ENCODE measurements at regions of chr1 and their contacts with region 1.

Region 1: DNA sequence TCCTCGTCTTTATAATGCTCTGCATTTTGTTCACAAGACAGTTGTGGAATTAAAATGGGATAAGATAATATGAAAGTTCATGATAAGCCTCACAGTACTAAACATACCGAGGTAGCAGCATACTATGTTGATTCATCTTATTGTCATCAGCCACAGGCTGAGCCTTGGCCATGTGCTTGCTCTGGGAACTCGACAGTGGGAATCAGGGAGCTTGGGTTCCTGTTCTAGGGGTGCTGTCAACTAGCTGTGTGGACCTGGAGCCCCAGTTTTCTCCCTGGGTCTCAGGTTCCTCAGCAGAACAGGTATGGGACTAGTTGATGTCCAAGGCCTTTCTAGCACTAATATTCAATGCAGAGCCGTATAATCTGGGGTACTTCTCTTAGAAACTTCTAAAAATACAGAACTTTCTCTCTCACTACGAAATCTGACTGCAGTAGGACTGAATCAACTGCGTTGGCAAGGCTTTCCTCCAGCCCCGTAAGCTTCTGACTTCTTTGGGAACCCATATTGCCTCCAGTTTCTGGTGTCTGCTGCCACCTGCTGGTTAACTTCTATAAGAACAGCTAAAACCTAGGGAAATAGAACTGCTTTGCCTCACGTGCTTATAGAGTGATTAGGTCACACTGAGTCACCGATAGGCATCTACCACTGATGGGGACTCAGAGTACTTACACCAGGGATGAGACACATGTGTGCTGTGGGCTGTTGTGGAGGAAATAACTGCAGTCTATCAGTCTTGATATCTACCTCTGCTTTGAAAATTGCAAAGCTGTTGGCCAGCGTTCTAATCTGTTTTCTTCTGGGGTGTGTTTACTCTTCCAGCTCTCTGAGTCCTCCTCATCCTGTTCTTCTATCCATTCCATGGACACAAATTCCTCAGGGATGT is 110.9 kb downstream of the RGL1 start:
- DNase-seq: peak; percentile 97
- H3K4me3 ChIP-seq: no peak overlapping the region
- H3K27ac ChIP-seq: peak overlapping the region; percentile 59
- H3K4me1 ChIP-seq: peaks cover 32% of the 10 kb centered on the region
- H3K27me3 ChIP-seq: no peaks in the 10 kb centered on the region
- CTCF ChIP-seq: peak; percentile 68 to 74
- POLR2A ChIP-seq: peak; percentile 54

Region 2: DNA sequence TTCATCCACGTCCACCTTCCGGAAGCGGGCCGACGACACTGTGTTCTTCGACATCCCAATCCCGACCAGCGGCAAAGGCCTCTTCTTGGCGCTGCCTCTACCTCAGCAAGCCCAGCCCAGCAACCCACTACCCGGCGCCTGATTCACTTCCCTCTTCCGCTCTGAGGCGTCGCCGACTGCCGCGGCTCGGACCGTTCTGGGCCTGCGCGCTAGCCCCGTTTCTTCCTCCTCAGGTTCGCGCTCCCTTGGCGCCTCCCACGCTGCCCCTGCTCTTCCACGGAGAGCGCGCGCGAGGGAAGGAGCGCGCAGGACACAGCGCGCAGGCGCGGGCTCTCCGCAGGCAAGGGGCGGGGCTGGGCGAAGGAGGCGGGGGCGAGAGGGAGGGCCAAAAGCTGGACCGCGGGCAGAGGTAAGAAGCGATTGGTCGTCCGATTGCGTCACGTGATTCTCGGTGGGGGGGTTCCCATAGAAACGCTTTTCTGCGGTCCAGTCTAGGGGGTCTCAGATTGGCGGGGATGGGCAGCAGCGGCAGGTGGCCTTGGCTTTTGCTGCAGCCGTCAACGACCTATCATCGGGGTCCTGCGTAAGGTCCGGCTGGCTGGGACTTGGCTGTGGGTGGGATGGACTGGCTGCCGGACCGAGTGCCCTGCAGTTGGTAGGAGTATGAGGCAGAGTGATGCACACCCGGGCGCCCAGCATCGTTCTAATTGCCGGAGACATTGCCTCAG is 280.1 kb before region 1 on chr1 and contains the start of gene ARPC5:
- CTCF ChIA-PET with region 1: interaction called, 46 read pairs
- POLR2A ChIA-PET with region 1: no interaction called
- dilution Hi-C with region 1: no loop called
- intact Hi-C with region 1: loop called (anchors 1 kb)
- DNase-seq: peak; percentile 100
- H3K4me3 ChIP-seq: peak within 1 kb of the TSS; percentile 93 to 100 (median 99)
- H3K27ac ChIP-seq: peak within 1 kb of the TSS; percentile 67
- H3K4me1 ChIP-seq: peaks cover 28% of the 10 kb centered on the region
- H3K27me3 ChIP-seq: no peaks in the 10 kb centered on the region
- CTCF ChIP-seq: no peak
- POLR2A ChIP-seq: peak; percentile 95
- total RNA-seq, gene ARPC5: 185 and 190 TPM in 2 replicates

Region 3: DNA sequence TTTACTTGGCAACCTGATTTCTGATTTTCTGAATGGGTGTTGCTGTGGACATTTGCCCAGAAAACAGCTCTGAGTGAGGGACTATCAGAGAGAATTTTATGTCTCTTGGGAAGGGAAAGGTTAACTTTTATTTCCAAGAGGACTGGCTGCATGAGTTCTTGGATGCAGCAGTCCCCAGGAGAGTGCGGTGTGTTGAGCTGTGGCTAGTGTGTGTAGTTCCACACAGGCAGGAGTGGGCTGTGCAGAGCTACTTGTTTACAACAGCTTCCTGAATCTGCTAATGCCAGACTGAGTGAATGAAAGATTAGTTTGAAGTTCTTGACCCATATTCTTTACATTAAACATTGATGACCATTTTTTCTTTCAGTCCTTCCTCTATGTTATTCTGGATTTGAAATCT is 221.8 kb before region 1 on chr1:
- CTCF ChIA-PET with region 1: interaction called, 13 read pairs
- POLR2A ChIA-PET with region 1: no interaction called
- dilution Hi-C with region 1: no loop called
- intact Hi-C with region 1: no loop called
- DNase-seq: peak; percentile 11
- H3K4me3 ChIP-seq: no peak overlapping the region
- H3K27ac ChIP-seq: no peak overlapping the region
- H3K4me1 ChIP-seq: peaks cover 14% of the 10 kb centered on the region
- H3K27me3 ChIP-seq: no peaks in the 10 kb centered on the region
- CTCF ChIP-seq: no peak
- POLR2A ChIP-seq: no peak

Region 4: DNA sequence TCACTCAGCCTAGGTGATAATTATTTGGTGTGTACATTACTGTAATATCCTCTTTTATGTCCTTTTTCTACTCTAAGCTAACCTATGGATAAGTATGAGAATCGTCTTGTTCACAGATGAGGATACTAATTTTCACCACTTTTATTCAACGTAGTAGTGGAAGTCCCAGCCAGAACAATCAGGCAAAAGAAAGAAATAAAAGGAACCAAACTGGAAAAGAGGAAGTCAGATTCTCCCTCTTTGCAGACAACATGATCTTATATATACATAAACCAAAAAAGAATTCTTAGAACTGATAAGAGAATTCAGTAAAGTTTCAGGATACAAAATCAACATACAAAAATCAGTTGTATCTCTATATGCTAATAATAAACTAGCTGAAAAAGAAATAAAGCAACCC is 123.6 kb before region 1 on chr1:
- CTCF ChIA-PET with region 1: interaction called, 10 read pairs
- POLR2A ChIA-PET with region 1: no interaction called
- dilution Hi-C with region 1: no loop called
- intact Hi-C with region 1: no loop called
- DNase-seq: no peak
- H3K4me3 ChIP-seq: no peak overlapping the region
- H3K27ac ChIP-seq: no peak overlapping the region
- H3K4me1 ChIP-seq: no peaks in the 10 kb centered on the region
- H3K27me3 ChIP-seq: no peaks in the 10 kb centered on the region
- CTCF ChIP-seq: no peak
- POLR2A ChIP-seq: no peak

Region 5: DNA sequence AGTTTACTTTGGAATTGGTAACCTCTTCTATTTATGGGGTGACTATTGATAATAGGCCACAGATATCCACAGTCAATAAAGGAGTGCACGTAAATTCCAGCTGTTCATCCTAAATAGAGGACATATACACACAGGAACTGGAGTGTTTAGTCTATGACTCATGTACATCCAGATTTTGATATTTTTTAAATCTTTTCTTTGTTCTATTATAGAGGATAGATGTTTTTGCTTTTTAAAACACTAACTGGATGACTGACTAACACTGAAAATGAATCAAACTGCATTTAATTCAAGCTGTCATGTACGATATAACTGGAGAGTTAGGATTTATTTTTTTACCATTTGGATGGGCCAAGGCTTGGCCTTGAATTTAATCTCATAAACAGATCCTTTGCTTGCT is 65.0 kb before region 1 on chr1:
- CTCF ChIA-PET with region 1: interaction called, 12 read pairs
- POLR2A ChIA-PET with region 1: no interaction called
- dilution Hi-C with region 1: no loop called
- intact Hi-C with region 1: no loop called
- DNase-seq: peak; percentile 63
- H3K4me3 ChIP-seq: no peak overlapping the region
- H3K27ac ChIP-seq: peak overlapping the region; percentile 60
- H3K4me1 ChIP-seq: peaks cover 38% of the 10 kb centered on the region
- H3K27me3 ChIP-seq: no peaks in the 10 kb centered on the region
- CTCF ChIP-seq: no peak
- POLR2A ChIP-seq: no peak

Region 6: DNA sequence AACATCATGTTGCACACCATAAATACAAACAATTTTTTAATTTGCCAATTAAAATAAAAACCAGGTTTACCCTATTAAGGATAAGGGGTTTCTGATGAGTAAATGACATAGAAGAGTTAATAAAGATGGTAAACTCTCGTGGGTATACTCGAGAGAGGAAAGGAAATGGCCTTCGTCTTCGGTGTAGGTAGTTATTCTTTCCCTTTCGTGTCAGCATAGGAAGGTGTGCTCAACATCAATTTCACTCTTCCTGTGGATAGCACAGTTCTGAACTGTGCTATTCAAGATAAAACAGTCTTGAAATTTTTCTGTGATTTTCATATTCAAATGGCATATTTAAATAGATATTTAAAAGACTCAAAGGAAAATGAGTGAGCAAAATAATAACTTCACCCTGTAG is 12.8 kb before region 1 on chr1:
- CTCF ChIA-PET with region 1: interaction called, 11 read pairs
- POLR2A ChIA-PET with region 1: no interaction called
- dilution Hi-C with region 1: no loop called
- intact Hi-C with region 1: no loop called
- DNase-seq: no peak
- H3K4me3 ChIP-seq: no peak overlapping the region
- H3K27ac ChIP-seq: no peak overlapping the region
- H3K4me1 ChIP-seq: peaks cover 8% of the 10 kb centered on the region
- H3K27me3 ChIP-seq: no peaks in the 10 kb centered on the region
- CTCF ChIP-seq: no peak
- POLR2A ChIP-seq: no peak

Measured in endothelial cell of umbilical vein (primary cell).